Transverse colon (tissue), 4 donors: ENCODE measurements at regions of chr2 and their contacts with region 1.

Region 1: GRCh38 chr2:98412751-98413458 is 31.8 kb upstream of the INPP4A start:
- DNase-seq: peak; percentile 48
- H3K4me3 ChIP-seq: no peak overlapping the region
- H3K27ac ChIP-seq: no peak overlapping the region
- H3K4me1 ChIP-seq: no peaks in the 10 kb centered on the region
- H3K27me3 ChIP-seq: no peaks in the 10 kb centered on the region
- CTCF ChIP-seq: peak; percentile 75 to 80 (median 76)
- EP300 ChIP-seq: no peak
- POLR2A ChIP-seq: no peak

Region 2: DNA sequence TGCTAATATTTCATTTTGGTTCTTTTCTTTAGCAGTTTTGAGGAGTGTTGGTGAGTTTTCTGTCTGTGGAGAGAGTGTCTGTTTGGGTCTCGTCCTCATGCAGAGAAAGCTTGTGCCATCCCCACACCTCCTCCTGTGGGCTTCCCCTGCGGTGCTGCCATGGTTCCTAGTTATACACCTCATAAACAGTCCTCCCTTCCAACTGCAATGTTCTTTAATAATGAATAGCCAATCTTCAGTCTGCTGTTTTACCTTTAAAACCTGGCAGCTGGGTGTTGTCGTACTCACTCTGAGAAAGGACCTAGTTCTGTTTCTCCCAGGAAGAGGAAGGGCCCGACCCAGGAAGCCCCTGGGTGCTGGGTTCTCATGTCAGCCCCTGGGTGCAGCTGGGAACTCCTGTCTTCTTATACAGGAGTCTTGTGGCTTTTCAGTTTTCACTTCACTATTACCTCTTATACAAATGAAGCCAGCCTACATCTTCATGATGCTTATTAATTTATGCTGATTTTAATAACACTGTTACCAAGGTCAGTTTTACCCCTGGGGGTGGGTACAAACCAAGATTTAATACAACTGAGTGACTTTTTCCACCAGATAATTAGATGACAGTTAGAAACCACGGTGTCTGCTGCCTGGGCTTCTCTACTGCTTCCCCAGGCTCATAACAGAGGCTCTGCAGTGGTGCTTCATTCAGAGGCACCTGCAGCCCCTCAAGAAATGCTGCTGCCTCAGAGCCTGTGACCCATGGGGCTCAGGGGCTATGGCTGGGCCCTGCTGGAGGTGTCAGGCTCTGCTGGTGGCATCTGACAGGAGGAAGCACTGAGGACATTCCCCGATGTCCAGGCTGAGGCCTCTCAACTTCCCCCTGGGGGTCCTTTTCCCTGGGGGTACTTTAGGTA is 136.3 kb after region 1 on chr2:
- in situ Hi-C with region 1: loop called in 2 of 4 experiments (anchors 25 kb)
- intact Hi-C with region 1: no loop called
- DNase-seq: peak; percentile 31
- H3K4me3 ChIP-seq: no peak overlapping the region
- H3K27ac ChIP-seq: no peak overlapping the region
- H3K4me1 ChIP-seq: no peaks in the 10 kb centered on the region
- H3K27me3 ChIP-seq: no peaks in the 10 kb centered on the region
- CTCF ChIP-seq: no peak
- EP300 ChIP-seq: no peak
- POLR2A ChIP-seq: no peak

Region 3: GRCh38 chr2:98577313-98577712 is 164.4 kb after region 1 on chr2:
- in situ Hi-C with region 1: loop called in 2 of 4 experiments (anchors 25 kb)
- intact Hi-C with region 1: no loop called
- DNase-seq: no peak
- H3K4me3 ChIP-seq: no peak overlapping the region
- H3K27ac ChIP-seq: no peak overlapping the region
- H3K4me1 ChIP-seq: no peaks in the 10 kb centered on the region
- H3K27me3 ChIP-seq: no peaks in the 10 kb centered on the region
- CTCF ChIP-seq: no peak
- EP300 ChIP-seq: no peak
- POLR2A ChIP-seq: no peak

Region 4: GRCh38 chr2:98608116-98608999 is 195.5 kb after region 1 on chr2 and contains the starts of genes COA5 and UNC50:
- in situ Hi-C with region 1: loop called in 1 of 4 experiments (anchors 10 kb)
- intact Hi-C with region 1: no loop called
- DNase-seq: peak; percentile 92
- H3K4me3 ChIP-seq: peak within 1 kb of the TSS; percentile 87 to 91 (median 88)
- H3K27ac ChIP-seq: peak within 1 kb of the TSS; percentile 88 to 98 (median 95)
- H3K4me1 ChIP-seq: peaks cover 32 to 41% (median 37%) of the 10 kb centered on the region in 4 donors
- H3K27me3 ChIP-seq: no peaks in the 10 kb centered on the region
- CTCF ChIP-seq: peak in 3 of 5 experiments; percentile 2 to 9 (median 7)
- EP300 ChIP-seq: no peak
- POLR2A ChIP-seq: peak; percentile 92
- total RNA-seq, gene COA5: 4.5 to 36.2 (median 23.2) TPM
- total RNA-seq, gene UNC50: 23.9 to 46.8 (median 36.3) TPM

Region 5: GRCh38 chr2:99066075-99066958 is 653.4 kb after region 1 on chr2:
- in situ Hi-C with region 1: loop called in 1 of 4 experiments (anchors 25 kb)
- intact Hi-C with region 1: no loop called
- DNase-seq: peak; percentile 38
- H3K4me3 ChIP-seq: peak overlapping the region in 1 of 4 donors; percentile 26
- H3K27ac ChIP-seq: peak overlapping the region; percentile 71 to 84 (median 78)
- H3K4me1 ChIP-seq: peaks cover 0 to 15% (median 7%) of the 10 kb centered on the region in 4 donors
- H3K27me3 ChIP-seq: no peaks in the 10 kb centered on the region
- CTCF ChIP-seq: peak; percentile 36 to 56 (median 45)
- EP300 ChIP-seq: no peak
- POLR2A ChIP-seq: peak; percentile 44